HAP-1 (cell line): ENCODE measurements at regions of chr1 and their contacts with region 1.

Region 1: GRCh38 chr1:205591522-205592351 is 40.1 kb downstream of the ELK4 start:
- DNase-seq: peak; percentile 78 to 92
- H3K4me3 ChIP-seq: peak overlapping the region; percentile 12; the same call in 1 of the 2 replicates
- H3K4me1 ChIP-seq: no peaks in the 10 kb centered on the region
- H3K27me3 ChIP-seq: no peaks in the 10 kb centered on the region

Region 2: DNA sequence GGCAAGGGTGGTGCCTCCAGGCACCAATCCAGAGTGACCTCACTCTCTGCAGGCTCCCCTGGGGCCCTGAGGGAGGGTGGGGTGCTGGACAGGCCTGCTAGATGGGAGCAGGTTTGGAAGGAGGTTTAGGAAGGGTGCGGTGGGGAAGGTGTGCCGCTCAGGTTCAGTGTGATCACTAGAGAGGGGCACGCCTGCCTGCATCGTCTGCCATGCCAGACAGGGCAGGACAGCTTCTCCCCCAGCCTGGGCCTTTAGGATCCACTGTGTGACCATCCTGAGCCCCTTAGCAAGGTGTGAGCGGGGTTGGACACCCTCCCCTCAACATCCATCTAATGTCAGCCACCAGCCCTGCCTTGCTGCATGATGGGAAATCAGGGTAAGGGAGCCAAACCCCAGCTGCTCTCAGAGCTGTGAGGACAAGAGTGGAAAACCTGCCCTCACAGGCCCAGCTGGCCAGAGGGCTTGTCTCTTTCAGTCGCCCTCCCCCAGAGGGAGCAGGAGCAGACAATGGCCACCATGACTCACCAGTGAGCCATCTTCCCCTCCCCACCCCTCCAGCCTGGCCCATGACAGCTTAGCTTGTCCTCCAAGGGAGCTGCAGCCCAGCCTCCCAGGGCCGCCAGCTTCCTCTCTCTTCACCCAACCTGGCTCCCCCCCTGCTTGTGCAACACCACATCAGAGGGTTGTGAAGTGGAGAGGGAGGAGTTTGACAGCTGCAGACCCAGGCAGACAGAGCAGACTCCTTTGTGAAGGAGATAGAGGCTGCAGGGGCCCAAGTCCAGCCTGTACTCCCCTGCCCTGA is 307.2 kb before region 1 on chr1:
- in situ Hi-C with region 1: no loop called
- DNase-seq: peak; percentile 67 to 92
- H3K4me3 ChIP-seq: no peak overlapping the region
- H3K4me1 ChIP-seq: peaks cover 31% of the 10 kb centered on the region
- H3K27me3 ChIP-seq: no peaks in the 10 kb centered on the region

Region 3: GRCh38 chr1:205493241-205494085 is 98.3 kb before region 1 on chr1:
- in situ Hi-C with region 1: no loop called
- DNase-seq: no peak
- H3K4me3 ChIP-seq: no peak overlapping the region
- H3K4me1 ChIP-seq: peaks cover 13% of the 10 kb centered on the region
- H3K27me3 ChIP-seq: 0 out of 2 replicates have a peak, but pooled peaks cover 5% of the 10 kb centered on the region

Region 4: GRCh38 chr1:205658943-205659581 is 67.3 kb after region 1 on chr1:
- in situ Hi-C with region 1: loop called (anchors 5 kb)
- DNase-seq: peak; percentile 48 to 85
- H3K4me3 ChIP-seq: no peak overlapping the region
- H3K4me1 ChIP-seq: peaks cover under 1% of the 10 kb centered on the region
- H3K27me3 ChIP-seq: no peaks in the 10 kb centered on the region